Mammary epithelial cell (primary cell): ENCODE measurements at regions of chr4 and their contacts with region 1.

Region 1: DNA sequence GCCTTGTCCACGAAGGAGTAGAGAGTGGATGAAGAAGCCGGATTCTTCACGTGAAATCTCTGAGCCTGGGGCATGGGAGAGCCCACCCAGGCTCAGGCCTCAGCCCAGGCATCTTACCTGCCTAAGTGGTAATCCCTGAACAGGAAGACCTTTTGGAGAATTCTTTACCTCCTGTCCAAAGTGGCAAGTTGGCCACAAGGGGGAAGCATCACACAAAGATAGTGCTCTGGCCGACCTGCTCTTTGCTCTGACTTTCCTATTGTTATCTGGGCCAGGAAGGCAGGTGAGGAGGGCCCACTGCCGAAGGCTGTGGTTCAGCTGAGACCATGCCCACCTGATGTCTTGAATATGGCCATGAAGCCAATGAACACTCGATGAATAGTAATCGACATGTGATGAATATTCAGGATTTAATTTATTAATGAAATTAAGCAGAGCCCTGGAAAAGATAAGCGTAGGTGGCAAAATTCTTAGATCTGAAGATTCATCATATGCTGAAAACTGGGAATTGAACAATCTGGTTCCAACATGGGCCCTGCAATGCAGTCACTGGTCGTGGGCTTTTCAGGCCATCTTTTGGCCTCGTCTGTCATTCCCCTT is 93.8 kb downstream of the PDGFRA start:
- DNase-seq: peak; percentile 57
- H3K4me3 ChIP-seq: no peak overlapping the region
- H3K27ac ChIP-seq: no peak overlapping the region
- H3K4me1 ChIP-seq: no peaks in the 10 kb centered on the region
- H3K27me3 ChIP-seq: no peaks in the 10 kb centered on the region
- CTCF ChIP-seq: peak; percentile 57 to 83

Region 2: DNA sequence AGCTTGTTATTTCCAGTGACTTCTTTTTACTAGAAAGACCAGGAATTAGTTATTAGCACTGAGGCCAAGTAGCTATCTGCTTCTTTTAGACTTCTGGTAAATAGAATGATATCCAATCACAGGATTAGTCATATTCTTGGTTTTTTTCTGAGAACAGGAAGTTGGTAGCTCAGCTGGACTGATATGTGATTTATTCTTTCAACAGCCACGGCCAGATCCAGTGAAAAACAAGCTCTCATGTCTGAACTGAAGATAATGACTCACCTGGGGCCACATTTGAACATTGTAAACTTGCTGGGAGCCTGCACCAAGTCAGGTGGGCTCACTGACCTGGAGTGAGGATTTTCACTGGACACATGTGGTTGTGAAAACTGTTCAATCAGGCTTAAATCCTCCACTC is 45.2 kb before region 1 on chr4:
- CTCF ChIA-PET with region 1: no interaction called
- dilution Hi-C with region 1: no loop called
- in situ Hi-C with region 1: no loop called
- intact Hi-C with region 1: no loop called
- DNase-seq: peak; percentile 81
- H3K4me3 ChIP-seq: no peak overlapping the region
- H3K27ac ChIP-seq: no peak overlapping the region
- H3K4me1 ChIP-seq: peaks cover 23% of the 10 kb centered on the region
- H3K27me3 ChIP-seq: no peaks in the 10 kb centered on the region
- CTCF ChIP-seq: no peak

Region 3: GRCh38 chr4:54384563-54384962 is 61.6 kb after region 1 on chr4:
- CTCF ChIA-PET with region 1: no interaction called
- dilution Hi-C with region 1: no loop called
- in situ Hi-C with region 1: no loop called
- intact Hi-C with region 1: loop called (anchors 2 kb)
- DNase-seq: peak; percentile 14
- H3K4me3 ChIP-seq: no peak overlapping the region
- H3K27ac ChIP-seq: no peak overlapping the region
- H3K4me1 ChIP-seq: no peaks in the 10 kb centered on the region
- H3K27me3 ChIP-seq: peaks cover 2% of the 10 kb centered on the region
- CTCF ChIP-seq: peak; percentile 35 to 63

Region 4: GRCh38 chr4:54440394-54441136 is 117.6 kb after region 1 on chr4:
- CTCF ChIA-PET with region 1: no interaction called
- dilution Hi-C with region 1: no loop called
- in situ Hi-C with region 1: loop called in 1 of 2 experiments (anchors 10 kb)
- intact Hi-C with region 1: loop called (anchors 1 kb)
- DNase-seq: peak; percentile 18
- H3K4me3 ChIP-seq: no peak overlapping the region
- H3K27ac ChIP-seq: no peak overlapping the region
- H3K4me1 ChIP-seq: no peaks in the 10 kb centered on the region
- H3K27me3 ChIP-seq: no peaks in the 10 kb centered on the region
- CTCF ChIP-seq: peak; percentile 66 to 67

Region 5: GRCh38 chr4:54840992-54841768 is 518.3 kb after region 1 on chr4:
- CTCF ChIA-PET with region 1: no interaction called
- dilution Hi-C with region 1: no loop called
- in situ Hi-C with region 1: no loop called
- intact Hi-C with region 1: loop called (anchors 2 kb)
- DNase-seq: no peak
- H3K4me3 ChIP-seq: no peak overlapping the region
- H3K27ac ChIP-seq: no peak overlapping the region
- H3K4me1 ChIP-seq: no peaks in the 10 kb centered on the region
- H3K27me3 ChIP-seq: peaks cover 9% of the 10 kb centered on the region
- CTCF ChIP-seq: peak in 1 of 2 donors; percentile 55

Region 6: GRCh38 chr4:55321707-55322264 is 998.9 kb after region 1 on chr4:
- CTCF ChIA-PET with region 1: no interaction called
- dilution Hi-C with region 1: no loop called
- in situ Hi-C with region 1: no loop called
- intact Hi-C with region 1: loop called (anchors 5 kb)
- DNase-seq: peak; percentile 63
- H3K4me3 ChIP-seq: no peak overlapping the region
- H3K27ac ChIP-seq: no peak overlapping the region
- H3K4me1 ChIP-seq: no peaks in the 10 kb centered on the region
- H3K27me3 ChIP-seq: no peaks in the 10 kb centered on the region
- CTCF ChIP-seq: peak; percentile 61 to 73